Activated CD4-positive, alpha-beta memory T cell treated with anti-CD3 and anti-CD28 coated beads, Interleukin-2, amount 10 ng/mL, durations not matched to agents 7 days and 5 days (primary cell): ENCODE measurements at regions of chr1 and their contacts with region 1.

Region 1: DNA sequence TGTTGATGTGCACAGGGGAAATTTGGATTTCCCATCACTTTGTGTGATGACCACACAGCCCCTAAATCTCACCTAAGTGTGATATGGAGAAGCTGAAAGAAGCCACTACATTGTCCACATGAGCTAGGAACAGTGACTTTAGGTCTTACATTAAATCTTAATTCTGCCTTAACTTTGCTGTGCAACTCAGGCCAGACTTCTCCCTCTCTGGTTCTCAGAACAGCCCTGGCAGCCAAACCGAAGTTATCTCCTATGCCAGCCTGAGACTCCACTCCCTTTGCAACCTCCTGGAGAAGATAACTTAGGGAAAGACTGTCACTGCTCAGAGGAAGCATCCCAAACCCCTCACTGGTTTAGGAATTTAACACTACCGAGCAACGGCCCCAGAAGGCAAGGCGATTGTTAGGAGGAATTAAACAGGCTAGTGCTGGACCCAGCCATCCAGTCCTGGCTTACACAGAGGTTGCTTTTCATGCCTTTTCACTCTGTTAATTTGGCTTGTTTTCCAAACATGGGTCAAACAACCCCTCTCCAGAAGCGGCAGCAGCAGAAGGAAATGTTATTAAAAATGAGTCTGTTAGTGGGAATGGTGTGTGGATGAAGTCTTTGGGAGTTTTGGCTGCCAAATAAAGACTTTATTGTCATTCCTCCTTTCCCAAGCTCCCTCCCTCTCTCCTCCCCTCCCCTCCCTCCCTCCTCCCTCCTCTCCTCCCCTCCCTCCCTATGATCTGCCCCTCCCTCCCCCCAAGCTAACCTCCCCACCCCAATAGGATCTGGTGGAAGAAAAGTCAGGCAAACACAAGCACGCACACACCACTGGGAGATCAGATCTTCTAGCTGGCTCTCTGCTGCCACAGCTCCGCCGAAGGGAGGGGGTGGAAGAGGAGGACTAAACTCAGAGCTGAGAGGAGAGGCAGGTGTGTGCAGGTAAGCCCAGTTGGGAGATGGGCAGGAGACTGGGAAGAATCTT is at the start of gene PRELP:
- DNase-seq: no peak
- H3K4me3 Mint-ChIP-seq: no peak within 1 kb of the TSS
- H3K27ac Mint-ChIP-seq: no peak within 1 kb of the TSS
- H3K4me1 Mint-ChIP-seq: peaks cover 8% of the 10 kb centered on the region
- H3K27me3 Mint-ChIP-seq: peaks cover 47% of the 10 kb centered on the region
- total RNA-seq, gene PRELP: not detected

Region 2: GRCh38 chr1:203252678-203253077 is 222.6 kb before region 1 on chr1:
- CTCF ChIA-PET with region 1: no interaction called
- POLR2A ChIA-PET with region 1: no interaction called
- DNase-seq: no peak
- H3K4me3 Mint-ChIP-seq: no peak overlapping the region
- H3K27ac Mint-ChIP-seq: no peak overlapping the region
- H3K4me1 Mint-ChIP-seq: no peaks in the 10 kb centered on the region
- H3K27me3 Mint-ChIP-seq: peaks cover 58% of the 10 kb centered on the region

Region 3: DNA sequence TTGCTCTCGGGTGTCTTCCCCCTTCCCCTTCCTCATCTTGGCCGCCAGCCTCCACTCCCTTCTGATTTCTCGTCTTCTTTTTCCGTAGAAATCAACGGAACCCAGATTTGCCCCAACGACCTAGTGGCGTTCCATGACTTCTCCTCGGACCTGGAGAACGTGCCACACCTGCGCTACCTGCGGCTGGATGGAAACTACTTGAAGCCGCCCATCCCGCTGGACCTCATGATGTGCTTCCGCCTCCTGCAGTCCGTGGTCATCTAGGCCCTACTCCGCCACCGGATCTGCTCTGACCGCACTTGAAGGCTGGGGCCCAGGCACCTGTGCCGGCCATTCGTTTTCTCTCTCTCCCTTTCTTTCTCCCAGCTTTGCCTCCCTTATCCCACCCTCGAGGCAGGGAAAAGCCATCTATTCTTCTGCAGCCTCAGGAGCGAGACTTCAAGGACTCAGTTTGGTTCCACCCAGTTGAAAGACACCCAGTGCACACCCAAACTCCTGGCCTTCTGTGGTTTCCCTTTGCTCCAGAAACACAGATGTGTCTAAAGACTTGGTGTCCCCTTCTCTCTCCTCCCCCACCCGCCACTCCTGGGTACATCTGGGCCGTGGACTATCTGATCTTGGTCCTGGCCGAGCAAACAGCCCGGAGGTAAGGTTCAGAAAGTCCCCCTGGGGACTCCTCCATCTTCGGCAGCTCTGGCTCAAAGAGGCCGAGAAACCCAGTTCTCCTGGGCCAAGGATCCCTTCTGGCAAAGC is 11.5 kb after region 1 on chr1:
- CTCF ChIA-PET with region 1: interaction called, 24 read pairs
- POLR2A ChIA-PET with region 1: no interaction called
- DNase-seq: no peak
- H3K4me3 Mint-ChIP-seq: peak overlapping the region; percentile 57
- H3K27ac Mint-ChIP-seq: peak overlapping the region; percentile 46
- H3K4me1 Mint-ChIP-seq: peaks cover 9% of the 10 kb centered on the region
- H3K27me3 Mint-ChIP-seq: peaks cover 9% of the 10 kb centered on the region

Region 4: GRCh38 chr1:203534527-203535230 is 59.4 kb after region 1 on chr1:
- CTCF ChIA-PET with region 1: no interaction called
- POLR2A ChIA-PET with region 1: no interaction called
- DNase-seq: no peak
- H3K4me3 Mint-ChIP-seq: no peak overlapping the region
- H3K27ac Mint-ChIP-seq: no peak overlapping the region
- H3K4me1 Mint-ChIP-seq: no peaks in the 10 kb centered on the region
- H3K27me3 Mint-ChIP-seq: peaks cover 9% of the 10 kb centered on the region